ENCODE measurements at regions of chr19 and their contacts with region 1.

Region 1: DNA sequence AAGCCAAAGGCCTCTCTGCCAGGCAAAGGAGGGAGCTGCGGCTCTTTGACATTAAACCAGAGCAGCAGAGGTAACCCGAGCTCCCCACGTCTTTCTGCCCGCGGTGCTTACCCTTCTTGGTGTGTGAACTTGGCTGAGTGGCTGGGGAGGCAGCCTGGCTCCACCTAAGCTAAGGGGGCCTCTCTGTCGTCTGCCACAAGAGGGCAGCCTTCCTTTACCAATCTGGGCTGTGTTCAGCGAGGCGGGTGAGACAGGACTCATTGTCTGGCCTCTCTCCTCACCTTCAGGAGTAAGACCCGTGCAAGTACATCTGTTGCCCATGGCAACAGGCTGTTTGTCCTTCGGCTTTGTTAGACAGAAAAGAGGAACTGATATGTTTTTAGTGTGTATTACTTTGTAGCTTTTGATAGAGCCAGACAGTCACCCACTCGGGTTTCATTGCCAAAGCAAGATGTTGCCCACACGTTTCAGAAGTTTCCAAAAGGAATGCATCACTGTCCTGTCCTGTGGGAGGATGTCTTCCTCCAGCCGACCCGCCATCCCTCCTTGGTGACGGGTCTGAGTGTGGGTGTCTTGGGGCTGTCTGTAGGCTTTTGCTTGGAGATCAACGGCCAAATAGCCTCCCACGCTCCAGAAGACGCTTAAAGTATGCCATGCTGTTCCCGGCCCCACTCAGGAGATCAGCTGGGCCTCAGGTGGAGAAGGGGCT is 4.6 kb downstream of the POP4 start:
- DNase-seq: peak; percentile 86
- H3K4me3 Mint-ChIP-seq: no peak overlapping the region
- H3K27ac Mint-ChIP-seq: no peak overlapping the region
- H3K4me1 Mint-ChIP-seq: no peaks in the 10 kb centered on the region
- H3K27me3 Mint-ChIP-seq: no peaks in the 10 kb centered on the region
- CTCF ChIP-seq: peak; percentile 74

Region 2: GRCh38 chr19:29587518-29587986 is 23.2 kb before region 1 on chr19:
- CTCF ChIA-PET with region 1: no interaction called
- POLR2A ChIA-PET with region 1: no interaction called
- intact Hi-C with region 1: no loop called
- DNase-seq: no peak
- H3K4me3 Mint-ChIP-seq: no peak overlapping the region
- H3K27ac Mint-ChIP-seq: no peak overlapping the region
- H3K4me1 Mint-ChIP-seq: no peaks in the 10 kb centered on the region
- H3K27me3 Mint-ChIP-seq: peaks cover 11% of the 10 kb centered on the region
- CTCF ChIP-seq: no peak

Region 3: DNA sequence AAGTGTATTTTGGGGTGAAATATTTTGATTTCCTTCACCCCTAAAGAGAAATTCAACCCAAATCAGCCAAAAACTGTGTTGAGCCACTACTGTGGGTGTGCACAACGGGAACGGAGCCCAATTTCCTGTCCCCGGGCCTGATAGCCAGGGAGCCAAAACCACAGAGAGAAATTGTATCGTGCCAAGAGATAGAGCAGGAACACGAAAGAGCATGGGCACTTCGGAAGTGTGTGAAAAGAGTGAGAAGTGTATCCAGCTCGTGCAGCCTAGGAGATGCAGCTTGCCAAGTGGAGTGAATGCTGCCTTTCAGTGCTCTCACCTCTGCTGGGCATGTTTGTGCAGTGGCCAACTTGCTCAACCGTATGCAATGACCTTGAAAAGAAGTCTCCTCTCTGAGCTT is 35.2 kb after region 1 on chr19:
- CTCF ChIA-PET with region 1: interaction called, 25 read pairs
- POLR2A ChIA-PET with region 1: interaction called, 6 read pairs
- intact Hi-C with region 1: no loop called
- DNase-seq: peak; percentile 89
- H3K4me3 Mint-ChIP-seq: peak overlapping the region; percentile 55
- H3K27ac Mint-ChIP-seq: peak overlapping the region; percentile 46
- H3K4me1 Mint-ChIP-seq: peaks cover 20% of the 10 kb centered on the region
- H3K27me3 Mint-ChIP-seq: peaks cover 14% of the 10 kb centered on the region
- CTCF ChIP-seq: no peak

Region 4: DNA sequence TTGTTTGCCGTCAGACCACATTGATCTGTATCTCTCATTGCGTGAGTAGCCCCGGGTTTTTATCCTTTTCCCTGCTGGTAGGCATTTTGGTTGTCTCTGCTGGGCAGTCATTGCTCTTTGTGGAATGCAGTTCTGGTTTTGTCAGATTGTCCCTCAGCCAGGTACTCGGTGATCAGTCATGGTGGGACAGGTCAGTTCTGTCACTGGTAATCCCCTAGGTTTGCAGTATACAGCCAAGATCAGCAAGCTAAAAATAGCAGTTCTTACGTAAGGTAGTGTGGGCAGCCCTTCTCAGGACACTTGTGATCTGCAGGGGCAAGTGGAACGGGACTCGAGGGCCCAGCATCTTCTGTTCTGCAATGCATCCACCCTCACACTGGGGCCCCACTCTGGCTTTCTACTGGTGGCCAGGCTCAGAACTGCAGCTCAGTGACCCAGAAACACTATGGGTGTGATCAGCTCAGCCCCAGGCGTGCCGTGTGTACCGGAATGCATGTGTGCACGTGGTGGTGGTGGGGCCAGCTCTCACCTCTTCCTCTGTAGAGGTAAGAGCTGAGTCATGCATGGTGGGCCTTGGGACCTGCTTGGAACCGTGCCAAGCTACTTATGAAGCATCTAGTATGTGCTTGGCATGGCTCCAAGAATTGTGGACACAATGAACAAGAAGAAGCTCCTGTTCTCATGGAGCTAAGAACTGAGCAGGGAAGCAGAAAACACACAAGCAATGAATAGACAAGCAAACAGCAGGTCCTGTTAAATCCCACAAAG is 60.9 kb after region 1 on chr19:
- CTCF ChIA-PET with region 1: interaction called, 10 read pairs
- POLR2A ChIA-PET with region 1: interaction called, 3 read pairs
- intact Hi-C with region 1: no loop called
- DNase-seq: peak; percentile 91
- H3K4me3 Mint-ChIP-seq: no peak overlapping the region
- H3K27ac Mint-ChIP-seq: peak overlapping the region; percentile 66
- H3K4me1 Mint-ChIP-seq: peaks cover 18% of the 10 kb centered on the region
- H3K27me3 Mint-ChIP-seq: no peaks in the 10 kb centered on the region
- CTCF ChIP-seq: peak; percentile 19

Region 5: GRCh38 chr19:29714953-29715700 is 104.4 kb after region 1 on chr19 and contains the start of gene C19orf12:
- CTCF ChIA-PET with region 1: interaction called, 398 read pairs
- POLR2A ChIA-PET with region 1: interaction called, 126 read pairs
- intact Hi-C with region 1: no loop called
- DNase-seq: peak; percentile 44
- H3K4me3 Mint-ChIP-seq: peak within 1 kb of the TSS; percentile 87
- H3K27ac Mint-ChIP-seq: peak within 1 kb of the TSS; percentile 97
- H3K4me1 Mint-ChIP-seq: peaks cover 16% of the 10 kb centered on the region
- H3K27me3 Mint-ChIP-seq: no peaks in the 10 kb centered on the region
- CTCF ChIP-seq: no peak
- total RNA-seq, gene C19orf12: 20.2 and 21.6 TPM in 2 replicates

Region 6: GRCh38 chr19:30649934-30650614 is 1039.4 kb after region 1 on chr19:
- CTCF ChIA-PET with region 1: no interaction called
- POLR2A ChIA-PET with region 1: no interaction called
- intact Hi-C with region 1: loop called (anchors 10 kb)
- DNase-seq: peak; percentile 56
- H3K4me3 Mint-ChIP-seq: no peak overlapping the region
- H3K27ac Mint-ChIP-seq: no peak overlapping the region
- H3K4me1 Mint-ChIP-seq: no peaks in the 10 kb centered on the region
- H3K27me3 Mint-ChIP-seq: no peaks in the 10 kb centered on the region
- CTCF ChIP-seq: peak; percentile 61